ENCODE measurements at regions of chr19 and their contacts with region 1.

Region 1: GRCh38 chr19:49640113-49640898 is at the start of gene RRAS:
- DNase-seq: peak; percentile 100
- H3K4me3 Mint-ChIP-seq: peak within 1 kb of the TSS; percentile 98
- H3K27ac Mint-ChIP-seq: peak within 1 kb of the TSS; percentile 94
- H3K4me1 Mint-ChIP-seq: peaks cover 59% of the 10 kb centered on the region
- H3K27me3 Mint-ChIP-seq: peaks cover 6% of the 10 kb centered on the region
- total RNA-seq, gene RRAS: 17.8 to 18.1 TPM

Region 2: DNA sequence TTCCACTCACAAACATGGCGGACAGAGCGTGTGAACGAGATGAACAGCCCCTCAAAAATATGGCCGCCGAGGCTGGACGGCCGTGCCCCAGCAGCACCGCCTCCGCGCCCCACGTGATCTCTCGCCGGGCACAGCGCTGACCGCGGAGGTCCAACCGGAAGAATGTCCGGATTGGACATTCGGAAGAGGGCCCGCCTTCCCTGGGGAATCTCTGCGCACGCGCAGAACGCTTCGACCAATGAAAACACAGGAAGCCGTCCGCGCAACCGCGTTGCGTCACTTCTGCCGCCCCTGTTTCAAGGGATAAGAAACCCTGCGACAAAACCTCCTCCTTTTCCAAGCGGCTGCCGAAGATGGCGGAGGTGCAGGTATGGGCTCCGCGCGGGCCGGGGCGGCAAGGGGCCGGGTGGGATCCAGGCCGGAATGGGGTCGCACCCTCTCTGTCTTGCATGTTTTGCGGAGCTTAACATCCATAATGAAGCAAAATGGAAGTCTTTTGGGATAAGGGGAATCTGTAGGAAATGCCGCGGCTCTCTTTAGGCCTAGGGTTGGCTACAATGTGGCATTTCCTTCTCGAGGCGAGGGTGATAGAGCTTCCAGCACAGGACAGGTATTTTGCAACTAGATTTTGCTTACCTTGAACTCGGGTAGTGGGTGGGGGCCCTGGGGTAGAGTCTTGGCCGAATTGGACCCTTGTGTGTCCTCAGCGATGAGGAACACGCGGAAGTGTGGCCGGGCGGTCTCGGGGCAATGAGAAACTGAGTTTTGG is 152.8 kb before region 1 on chr19 and contains the start of gene RPL13A:
- CTCF ChIA-PET with region 1: no interaction called
- POLR2A ChIA-PET with region 1: interaction called, 10 read pairs
- DNase-seq: peak; percentile 100
- H3K4me3 Mint-ChIP-seq: peak within 1 kb of the TSS; percentile 95
- H3K27ac Mint-ChIP-seq: peak within 1 kb of the TSS; percentile 87
- H3K4me1 Mint-ChIP-seq: peaks cover 50% of the 10 kb centered on the region
- H3K27me3 Mint-ChIP-seq: no peaks in the 10 kb centered on the region
- total RNA-seq, gene RPL13A: 2,417 to 2,463 TPM

Region 3: GRCh38 chr19:49580264-49581006 is 59.9 kb before region 1 on chr19 and contains the start of gene NOSIP:
- CTCF ChIA-PET with region 1: interaction called, 5 read pairs
- POLR2A ChIA-PET with region 1: interaction called, 32 read pairs
- DNase-seq: peak; percentile 98
- H3K4me3 Mint-ChIP-seq: peak within 1 kb of the TSS; percentile 89
- H3K27ac Mint-ChIP-seq: peak within 1 kb of the TSS; percentile 82
- H3K4me1 Mint-ChIP-seq: peaks cover 33% of the 10 kb centered on the region
- H3K27me3 Mint-ChIP-seq: no peaks in the 10 kb centered on the region
- total RNA-seq, gene NOSIP: 162 to 163 TPM

Region 4: DNA sequence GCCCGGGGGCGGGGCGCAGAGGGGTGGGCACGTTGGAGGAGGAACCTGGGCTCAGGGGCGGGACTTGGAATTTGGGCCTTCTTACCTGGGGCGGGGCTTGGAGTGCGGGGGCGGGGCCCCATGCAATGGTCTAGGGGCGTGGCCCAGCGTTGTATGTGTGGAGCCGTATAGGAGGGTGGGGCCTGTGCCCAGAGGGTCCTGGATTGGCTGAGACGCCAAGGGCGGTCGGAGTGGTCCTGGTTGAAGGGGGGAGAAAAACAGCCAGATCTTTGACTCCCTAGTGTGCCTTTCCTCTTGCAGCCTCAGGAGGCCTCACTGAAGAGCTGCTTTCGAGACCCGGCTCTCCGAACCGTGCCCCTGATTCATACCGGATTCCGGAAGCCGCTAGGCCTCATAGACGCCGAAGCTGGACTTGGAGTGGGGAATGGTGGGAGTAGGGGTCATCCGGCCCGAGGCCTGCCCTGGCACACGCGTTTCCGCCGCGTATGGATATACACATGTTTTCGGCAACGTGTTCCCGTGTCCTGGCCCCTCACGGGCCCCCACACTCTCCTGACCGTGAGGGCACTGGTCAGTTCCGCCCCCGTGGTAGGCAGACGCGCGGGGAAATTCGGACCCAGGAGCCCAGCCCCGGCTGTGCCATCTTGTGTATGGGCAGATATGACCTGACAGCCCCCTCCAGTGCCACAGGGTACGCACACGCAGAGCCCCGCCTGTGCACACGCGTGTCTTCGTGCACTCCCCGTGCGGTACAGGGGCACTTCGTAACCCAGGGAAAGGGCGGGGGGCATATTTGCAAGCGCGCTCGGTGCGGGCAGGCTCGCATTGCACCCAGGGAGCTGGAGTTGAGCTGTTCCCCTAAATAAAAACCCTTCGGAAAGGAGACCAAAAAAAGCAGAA is 50.0 kb before region 1 on chr19:
- CTCF ChIA-PET with region 1: interaction called, 4 read pairs
- POLR2A ChIA-PET with region 1: interaction called, 44 read pairs
- DNase-seq: peak; percentile 97
- H3K4me3 Mint-ChIP-seq: peak overlapping the region; percentile 79
- H3K27ac Mint-ChIP-seq: peak overlapping the region; percentile 80
- H3K4me1 Mint-ChIP-seq: peaks cover 37% of the 10 kb centered on the region
- H3K27me3 Mint-ChIP-seq: peaks cover 9% of the 10 kb centered on the region

Region 5: DNA sequence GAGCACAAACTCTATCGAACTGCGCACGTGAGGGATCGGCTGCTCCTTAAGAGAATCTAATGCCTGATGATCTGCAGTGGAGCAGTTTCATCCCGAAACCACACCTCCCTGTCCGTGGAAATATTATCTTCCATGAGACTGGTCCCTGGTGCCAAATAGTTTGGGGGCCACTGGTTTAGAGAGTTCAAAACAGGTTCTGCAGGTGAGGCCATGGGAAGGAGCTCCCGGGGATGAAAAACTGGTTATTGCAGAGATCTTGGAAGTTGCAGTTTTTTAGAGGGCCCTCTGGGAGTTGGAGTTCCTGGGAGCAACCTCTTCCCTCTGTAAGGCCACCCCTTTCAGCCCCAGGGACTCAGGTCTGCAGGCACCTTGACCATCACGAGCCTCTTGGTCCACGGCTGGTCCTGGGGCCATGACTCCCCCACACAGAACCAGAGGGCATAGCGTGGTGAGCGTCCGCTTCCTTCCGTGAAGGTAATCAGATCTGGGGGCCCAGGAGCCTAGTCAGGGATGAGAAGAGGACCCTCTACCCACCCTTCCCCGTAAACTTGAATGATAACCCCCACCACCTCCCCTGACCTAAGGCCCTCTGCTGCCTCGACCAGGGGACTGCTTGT is 20.1 kb after region 1 on chr19:
- CTCF ChIA-PET with region 1: interaction called, 8 read pairs
- POLR2A ChIA-PET with region 1: interaction called, 91 read pairs
- DNase-seq: no peak
- H3K4me3 Mint-ChIP-seq: no peak overlapping the region
- H3K27ac Mint-ChIP-seq: no peak overlapping the region
- H3K4me1 Mint-ChIP-seq: peaks cover 19% of the 10 kb centered on the region
- H3K27me3 Mint-ChIP-seq: no peaks in the 10 kb centered on the region

Region 6: DNA sequence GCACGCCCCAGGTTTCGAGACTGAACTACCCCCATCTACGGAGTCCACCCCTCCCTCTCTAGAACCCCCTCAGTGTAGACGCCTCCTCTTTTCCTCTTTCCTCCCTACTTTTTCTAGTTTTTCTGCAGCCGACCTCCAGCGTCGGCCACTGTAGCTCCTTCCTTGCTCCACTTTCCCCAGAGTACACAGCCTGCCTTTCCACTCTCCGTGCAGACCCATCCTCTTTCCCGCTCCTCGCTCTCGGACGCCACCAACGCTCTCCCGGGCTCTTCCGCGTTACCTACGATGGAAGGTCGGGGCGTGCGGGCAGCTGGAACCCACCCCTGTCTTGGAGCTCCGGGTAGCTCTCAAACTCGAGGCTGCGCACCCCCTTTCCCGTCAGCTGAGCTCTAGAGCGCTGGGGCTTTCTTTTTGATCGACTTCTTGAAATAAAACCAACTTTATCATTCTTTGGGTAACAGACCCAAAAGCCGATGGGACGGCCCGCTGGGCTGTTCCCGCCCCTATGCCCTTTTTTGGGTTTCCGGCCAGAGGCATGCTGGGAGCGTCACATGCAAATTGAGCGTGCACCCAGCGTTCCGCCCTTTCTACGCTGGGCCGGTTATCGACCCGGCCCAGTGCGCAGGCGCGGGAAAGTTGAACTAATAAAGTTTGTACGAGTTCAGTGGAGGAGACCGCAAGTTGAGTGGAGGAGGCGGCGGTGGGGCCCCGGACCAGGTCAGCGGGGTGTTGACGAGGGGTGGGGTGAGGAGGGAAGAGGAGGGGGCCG is 25.2 kb after region 1 on chr19 and contains the starts of genes BCL2L12 and IRF3:
- CTCF ChIA-PET with region 1: interaction called, 90 read pairs
- POLR2A ChIA-PET with region 1: interaction called, 91 read pairs
- DNase-seq: peak; percentile 99
- H3K4me3 Mint-ChIP-seq: peak within 1 kb of the TSS; percentile 96
- H3K27ac Mint-ChIP-seq: peak within 1 kb of the TSS; percentile 93
- H3K4me1 Mint-ChIP-seq: peaks cover 38% of the 10 kb centered on the region
- H3K27me3 Mint-ChIP-seq: no peaks in the 10 kb centered on the region
- total RNA-seq, gene BCL2L12: 71.2 to 74.3 TPM
- total RNA-seq, gene IRF3: 163 to 174 TPM

Measured in activated CD4-positive, alpha-beta memory T cell treated with anti-CD3 and anti-CD28 coated beads, Interleukin-2, amount 10 ng/mL, durations not matched to agents 7 days and 5 days (primary cell).